ENCODE measurements at regions of chr10 and their contacts with region 1.

Region 1: GRCh38 chr10:93672022-93672678 is 30.2 kb downstream of the FRA10AC1 start:
- DNase-seq: no peak
- H3K4me3 ChIP-seq: no peak overlapping the region
- H3K27ac ChIP-seq: no peak overlapping the region
- H3K4me1 ChIP-seq: no peaks in the 10 kb centered on the region
- H3K27me3 ChIP-seq: no peaks in the 10 kb centered on the region
- CTCF ChIP-seq: no peak
- POLR2A ChIP-seq: no peak

Region 2: DNA sequence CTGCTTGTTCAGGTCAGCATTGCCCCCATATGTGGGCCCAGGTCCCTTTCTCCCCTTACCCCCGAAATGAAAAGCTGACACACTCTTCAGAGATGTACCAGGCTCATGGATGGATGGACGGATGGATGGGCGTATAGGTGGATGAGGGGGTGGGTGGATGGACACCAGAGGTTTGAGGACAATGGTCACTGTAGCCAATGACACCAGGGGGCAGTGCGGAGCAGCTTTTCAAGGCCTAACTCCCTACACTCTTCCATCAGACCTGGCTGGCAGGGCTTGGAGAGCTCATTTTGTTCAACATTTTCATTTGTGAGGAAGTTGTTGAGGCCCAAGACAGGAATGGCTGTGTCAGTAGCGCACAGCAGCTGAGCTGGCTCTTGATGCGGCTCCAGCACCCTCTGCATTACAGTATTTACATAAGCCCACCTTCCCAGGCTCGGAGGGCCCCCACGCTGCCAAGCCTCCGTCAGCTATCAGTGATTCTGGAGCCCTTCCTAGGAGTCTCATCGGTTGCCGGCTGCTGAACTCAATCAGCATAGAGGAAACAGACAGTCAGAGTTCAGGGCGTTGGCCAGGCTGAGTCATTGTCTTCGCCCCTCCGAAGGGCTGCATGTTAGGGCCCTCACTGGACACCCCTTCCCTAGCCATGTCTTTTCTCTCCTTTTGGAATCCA is 117.3 kb before region 1 on chr10:
- intact Hi-C with region 1: loop called (anchors 10 kb)
- DNase-seq: peak; percentile 68
- H3K4me3 ChIP-seq: no peak overlapping the region
- H3K27ac ChIP-seq: no peak overlapping the region
- H3K4me1 ChIP-seq: no peaks in the 10 kb centered on the region
- H3K27me3 ChIP-seq: no peaks in the 10 kb centered on the region
- CTCF ChIP-seq: peak; percentile 47 to 73 (median 61)
- POLR2A ChIP-seq: no peak

Region 3: GRCh38 chr10:93762979-93763391 is 90.8 kb after region 1 on chr10:
- intact Hi-C with region 1: no loop called
- DNase-seq: peak; percentile 50
- H3K4me3 ChIP-seq: no peak overlapping the region
- H3K27ac ChIP-seq: peak overlapping the region in 1 of 2 donors; percentile 13
- H3K4me1 ChIP-seq: no peaks in the 10 kb centered on the region
- H3K27me3 ChIP-seq: peaks cover 3% of the 10 kb centered on the region
- CTCF ChIP-seq: no peak
- POLR2A ChIP-seq: no peak